GM12878 (cell line): ENCODE measurements at regions of chr17 and their contacts with region 1.

Region 1: DNA sequence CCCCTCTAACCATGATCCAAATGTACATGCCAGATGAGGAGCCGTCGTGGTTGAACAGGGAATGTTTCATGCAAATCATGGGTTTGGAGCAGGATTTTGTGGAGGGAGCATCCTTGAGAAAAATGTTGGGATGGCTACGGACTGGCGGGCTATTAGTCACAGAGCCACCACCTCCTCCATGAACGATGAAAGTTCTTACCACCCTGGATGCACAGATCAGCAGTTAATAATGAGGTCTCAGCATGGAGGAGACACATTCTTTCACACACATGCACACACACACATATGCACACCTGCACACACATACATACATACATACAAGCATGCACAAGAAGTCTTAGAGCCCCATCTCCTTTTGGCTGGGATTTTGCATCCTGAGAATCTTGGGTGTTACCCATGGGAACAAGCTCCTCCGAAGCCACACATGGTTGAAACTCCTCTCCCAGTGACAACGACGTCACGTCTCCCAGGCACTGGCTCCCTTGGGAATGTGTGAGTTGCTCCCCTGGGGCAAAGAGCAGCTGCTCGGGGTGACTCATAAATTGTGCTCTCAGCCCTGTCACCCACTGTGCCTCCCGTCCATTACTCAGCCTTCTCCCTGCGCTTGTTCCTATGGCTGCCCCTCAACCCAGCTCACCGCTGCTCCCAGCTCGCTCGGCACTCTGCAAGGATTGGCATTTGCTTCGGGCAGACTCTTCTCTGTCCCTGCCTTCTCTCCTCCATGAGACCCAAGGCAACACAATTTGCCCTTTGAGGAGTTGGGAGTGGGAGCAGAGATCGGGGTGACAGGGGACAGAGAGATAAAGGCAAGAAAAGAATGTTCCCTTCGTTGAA is 344.6 kb downstream of the SOX9 start:
- DNase-seq: peak; percentile 93
- ATAC-seq: peak; percentile 78
- H3K4me3 ChIP-seq: peak overlapping the region; percentile 10; the same call in 1 of the 2 replicates
- H3K27ac ChIP-seq: peak overlapping the region; percentile 78
- H3K4me1 ChIP-seq: peaks cover 41% of the 10 kb centered on the region
- H3K27me3 ChIP-seq: no peaks in the 10 kb centered on the region
- CTCF ChIP-seq: peak in 1 of 3 experiments; percentile 30; a peak in 1 of 6 replicates
- EP300 ChIP-seq: peak; percentile 38 to 66; a peak in 3 of 4 replicates
- POLR2A ChIP-seq: no peak
- RAD21 ChIP-seq: 0 out of 2 replicates have a peak, but pooled peaks have one; percentile 1

Region 2: DNA sequence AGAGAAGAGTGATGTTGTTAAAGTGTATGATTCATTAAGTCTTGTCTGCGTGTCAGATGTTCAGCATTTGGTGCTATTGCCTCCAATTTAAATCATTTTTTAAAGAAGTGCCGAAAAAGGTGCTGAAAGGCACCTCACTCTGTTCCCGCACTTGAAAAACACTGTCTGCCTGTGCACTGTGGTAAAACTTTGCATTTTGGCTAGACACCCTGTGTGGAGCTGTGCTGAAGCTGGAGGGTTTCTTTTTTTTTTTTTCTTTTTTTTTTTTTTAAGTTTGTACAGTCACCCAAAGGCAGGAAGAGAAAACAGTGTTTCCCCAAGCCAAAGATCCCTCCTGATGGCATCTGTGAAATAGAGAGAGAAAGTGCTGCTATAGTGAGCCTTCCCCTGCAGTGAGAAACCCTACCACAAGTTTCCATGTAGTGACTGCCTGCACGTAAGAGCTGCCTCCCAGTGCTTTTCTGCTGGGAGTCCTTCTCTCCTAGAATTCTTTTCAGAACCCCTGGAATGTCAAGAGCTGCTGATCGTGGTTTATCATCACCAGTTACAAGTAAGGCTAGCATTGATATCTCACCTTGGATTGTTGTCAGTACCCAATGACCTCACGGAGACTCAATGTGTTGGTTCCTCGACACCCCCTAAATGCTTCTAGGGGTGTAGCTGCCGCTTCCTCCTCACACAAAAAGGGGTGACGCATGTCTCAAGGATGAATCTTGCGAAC is 460.6 kb before region 1 on chr17:
- CTCF ChIA-PET with region 1: no interaction called
- POLR2A ChIA-PET with region 1: interaction called, 3 read pairs
- RAD21 ChIA-PET with region 1: interaction called, 6 read pairs
- SMC1A ChIA-PET with region 1: interaction called, 4 read pairs
- in situ Hi-C with region 1: no loop called
- intact Hi-C with region 1: loop called (anchors 1 kb)
- DNase-seq: peak; percentile 79
- ATAC-seq: peak; percentile 77
- H3K4me3 ChIP-seq: peak overlapping the region; percentile 35
- H3K27ac ChIP-seq: peak overlapping the region; percentile 87
- H3K4me1 ChIP-seq: peaks cover 7% of the 10 kb centered on the region; the same call in 1 of the 2 replicates
- H3K27me3 ChIP-seq: no peaks in the 10 kb centered on the region
- CTCF ChIP-seq: no peak
- EP300 ChIP-seq: peak in 1 of 2 experiments; percentile 11; a peak in 2 of 4 replicates
- POLR2A ChIP-seq: no peak
- RAD21 ChIP-seq: peak; percentile 10; the same call in 1 of the 2 replicates

Region 3: GRCh38 chr17:72388765-72389473 is 76.5 kb before region 1 on chr17:
- CTCF ChIA-PET with region 1: interaction called, 6 read pairs
- POLR2A ChIA-PET with region 1: interaction called, 9 read pairs
- RAD21 ChIA-PET with region 1: interaction called, 27 read pairs
- SMC1A ChIA-PET with region 1: interaction called, 23 read pairs
- in situ Hi-C with region 1: no loop called
- intact Hi-C with region 1: no loop called
- DNase-seq: peak; percentile 93
- ATAC-seq: peak; percentile 77
- H3K4me3 ChIP-seq: no peak overlapping the region
- H3K27ac ChIP-seq: 0 out of 2 replicates have a peak overlapping the region, but pooled peaks have one; percentile 14
- H3K4me1 ChIP-seq: peaks cover 40% of the 10 kb centered on the region
- H3K27me3 ChIP-seq: no peaks in the 10 kb centered on the region
- CTCF ChIP-seq: peak; percentile 41 to 64 (median 47); a peak in 5 of 6 replicates
- EP300 ChIP-seq: peak in 1 of 2 experiments; percentile 62; a peak in 1 of 4 replicates
- POLR2A ChIP-seq: no peak
- RAD21 ChIP-seq: peak; percentile 55; the same call in 1 of the 2 replicates

Region 4: GRCh38 chr17:72432143-72432621 is 33.2 kb before region 1 on chr17:
- CTCF ChIA-PET with region 1: interaction called, 101 read pairs
- POLR2A ChIA-PET with region 1: interaction called, 170 read pairs
- RAD21 ChIA-PET with region 1: interaction called, 320 read pairs
- SMC1A ChIA-PET with region 1: interaction called, 335 read pairs
- in situ Hi-C with region 1: loop called (anchors 5 kb)
- intact Hi-C with region 1: no loop called
- DNase-seq: no peak
- ATAC-seq: no peak
- H3K4me3 ChIP-seq: no peak overlapping the region
- H3K27ac ChIP-seq: no peak overlapping the region
- H3K4me1 ChIP-seq: no peaks in the 10 kb centered on the region
- H3K27me3 ChIP-seq: no peaks in the 10 kb centered on the region
- CTCF ChIP-seq: no peak
- EP300 ChIP-seq: no peak
- POLR2A ChIP-seq: no peak
- RAD21 ChIP-seq: no peak

Region 5: DNA sequence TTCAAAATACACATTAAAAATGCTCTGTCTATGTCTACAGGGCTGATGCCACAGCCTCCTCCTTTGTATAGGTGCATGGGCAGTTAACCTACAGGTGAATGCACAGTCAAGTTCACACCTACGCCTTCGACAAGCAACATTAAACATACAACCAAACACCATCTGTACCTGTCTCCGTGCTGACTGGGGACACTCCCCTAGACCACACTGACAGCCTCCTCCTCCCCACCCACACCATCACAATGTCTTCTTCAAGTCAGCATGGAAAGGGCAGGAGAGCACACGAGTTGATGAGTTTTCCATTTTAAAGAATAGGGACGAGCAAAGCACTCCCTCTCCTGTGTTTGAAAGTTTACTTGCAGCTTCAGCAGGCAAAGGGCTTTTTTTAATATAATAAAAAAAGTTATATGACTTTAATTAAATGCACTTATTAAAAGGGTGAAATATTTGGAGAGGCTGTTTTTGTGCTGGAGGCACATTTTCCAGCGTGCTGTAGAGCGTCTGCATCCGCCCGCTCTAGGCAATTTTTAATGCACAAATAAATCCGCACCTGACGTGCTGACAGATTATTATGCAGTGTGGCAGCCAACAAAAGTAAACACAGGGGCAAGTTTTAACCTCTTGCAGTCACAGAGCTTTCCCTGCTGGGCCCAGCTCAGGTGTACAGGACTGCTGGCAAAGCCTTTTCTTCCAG is 23.3 kb after region 1 on chr17:
- CTCF ChIA-PET with region 1: interaction called, 6 read pairs
- POLR2A ChIA-PET with region 1: interaction called, 3 read pairs
- RAD21 ChIA-PET with region 1: interaction called, 5 read pairs
- SMC1A ChIA-PET with region 1: interaction called, 11 read pairs
- in situ Hi-C with region 1: no loop called
- intact Hi-C with region 1: no loop called
- DNase-seq: no peak
- ATAC-seq: no peak
- H3K4me3 ChIP-seq: no peak overlapping the region
- H3K27ac ChIP-seq: no peak overlapping the region
- H3K4me1 ChIP-seq: no peaks in the 10 kb centered on the region
- H3K27me3 ChIP-seq: no peaks in the 10 kb centered on the region
- CTCF ChIP-seq: no peak
- EP300 ChIP-seq: no peak
- POLR2A ChIP-seq: no peak
- RAD21 ChIP-seq: no peak

Region 6: GRCh38 chr17:72516772-72517399 is 51.5 kb after region 1 on chr17:
- CTCF ChIA-PET with region 1: interaction called, 111 read pairs
- POLR2A ChIA-PET with region 1: interaction called, 143 read pairs
- RAD21 ChIA-PET with region 1: interaction called, 353 read pairs
- SMC1A ChIA-PET with region 1: interaction called, 231 read pairs
- in situ Hi-C with region 1: no loop called
- intact Hi-C with region 1: loop called (anchors 1 kb)
- DNase-seq: no peak
- ATAC-seq: peak; percentile 53
- H3K4me3 ChIP-seq: no peak overlapping the region
- H3K27ac ChIP-seq: peak overlapping the region; percentile 84
- H3K4me1 ChIP-seq: peaks cover 56% of the 10 kb centered on the region
- H3K27me3 ChIP-seq: no peaks in the 10 kb centered on the region
- CTCF ChIP-seq: peak in 2 of 3 experiments; percentile 8 to 37; a peak in 1 of 6 replicates
- EP300 ChIP-seq: no peak
- POLR2A ChIP-seq: no peak
- RAD21 ChIP-seq: no peak

Region 7: GRCh38 chr17:72624652-72625051 is 159.2 kb after region 1 on chr17:
- CTCF ChIA-PET with region 1: no interaction called
- POLR2A ChIA-PET with region 1: no interaction called
- RAD21 ChIA-PET with region 1: no interaction called
- SMC1A ChIA-PET with region 1: no interaction called
- in situ Hi-C with region 1: no loop called
- intact Hi-C with region 1: no loop called
- DNase-seq: no peak
- ATAC-seq: no peak
- H3K4me3 ChIP-seq: no peak overlapping the region
- H3K27ac ChIP-seq: no peak overlapping the region
- H3K4me1 ChIP-seq: no peaks in the 10 kb centered on the region
- H3K27me3 ChIP-seq: no peaks in the 10 kb centered on the region; a peak in 1 of 4 replicates
- CTCF ChIP-seq: no peak
- EP300 ChIP-seq: no peak
- POLR2A ChIP-seq: no peak
- RAD21 ChIP-seq: no peak